GM12878 (cell line): ENCODE measurements at regions of chr1 and their contacts with region 1.

Region 1: DNA sequence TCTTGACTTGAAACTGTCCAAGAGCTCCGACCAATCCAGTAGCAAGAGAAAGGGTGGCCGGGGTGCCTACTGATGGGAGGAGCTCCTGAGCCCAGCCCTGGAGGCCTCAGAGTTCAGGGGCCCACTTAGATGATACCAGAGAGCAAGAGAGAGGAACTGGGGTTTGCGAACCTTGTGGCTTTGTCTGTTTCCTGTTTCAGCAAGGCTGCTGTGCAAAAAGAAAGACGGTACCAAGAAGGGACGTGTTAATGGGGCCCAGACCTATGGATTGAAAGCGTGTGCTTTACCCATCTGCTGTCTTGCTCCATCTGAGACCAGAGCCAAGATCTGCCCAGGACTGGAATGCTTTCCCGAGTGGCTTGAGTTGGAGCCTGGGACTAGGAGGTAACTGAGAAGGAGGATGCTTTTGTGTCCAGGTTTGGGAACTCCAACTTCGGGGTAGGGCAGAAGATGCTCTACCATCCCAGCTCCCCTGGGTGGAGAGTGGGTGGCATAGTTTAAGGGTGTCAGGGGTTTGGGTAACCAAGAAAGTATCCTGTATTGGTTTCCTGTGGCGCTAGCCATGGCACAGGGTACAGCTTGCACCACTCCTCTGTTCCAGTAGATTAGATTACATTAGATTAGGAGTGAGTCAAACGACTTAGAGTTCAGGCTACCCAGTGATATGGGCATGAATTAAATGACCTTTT is at the start of gene TRAF3IP3:
- DNase-seq: peak; percentile 83
- ATAC-seq: peak; percentile 86
- H3K4me3 ChIP-seq: peak within 1 kb of the TSS; percentile 73
- H3K27ac ChIP-seq: peak within 1 kb of the TSS; percentile 92
- H3K4me1 ChIP-seq: peaks cover 53% of the 10 kb centered on the region
- H3K27me3 ChIP-seq: no peaks in the 10 kb centered on the region
- CTCF ChIP-seq: no peak
- EP300 ChIP-seq: 0 out of 4 replicates have a peak, but pooled peaks of 1 of the 2 experiments have one; percentile 13
- POLR2A ChIP-seq: peak; percentile 84
- RAD21 ChIP-seq: no peak
- polyA plus RNA-seq, gene TRAF3IP3: 117 to 121 TPM

Region 2: GRCh38 chr1:209769171-209769904 is 13.3 kb after region 1 on chr1:
- CTCF ChIA-PET with region 1: interaction called, 117 read pairs
- POLR2A ChIA-PET with region 1: interaction called, 107 read pairs
- RAD21 ChIA-PET with region 1: interaction called, 188 read pairs
- SMC1A ChIA-PET with region 1: interaction called, 282 read pairs
- in situ Hi-C with region 1: no loop called
- intact Hi-C with region 1: loop called (anchors 1 kb)
- DNase-seq: peak; percentile 75
- ATAC-seq: peak; percentile 84
- H3K4me3 ChIP-seq: peak overlapping the region; percentile 72
- H3K27ac ChIP-seq: peak overlapping the region; percentile 93
- H3K4me1 ChIP-seq: peaks cover 52% of the 10 kb centered on the region
- H3K27me3 ChIP-seq: no peaks in the 10 kb centered on the region
- CTCF ChIP-seq: no peak
- EP300 ChIP-seq: peak; percentile 73 to 79; a peak in 3 of 4 replicates
- POLR2A ChIP-seq: no peak
- RAD21 ChIP-seq: no peak

Region 3: GRCh38 chr1:209774592-209774991 is 18.5 kb after region 1 on chr1:
- CTCF ChIA-PET with region 1: interaction called, 117 read pairs
- POLR2A ChIA-PET with region 1: interaction called, 107 read pairs
- RAD21 ChIA-PET with region 1: interaction called, 188 read pairs
- SMC1A ChIA-PET with region 1: interaction called, 282 read pairs
- in situ Hi-C with region 1: no loop called
- intact Hi-C with region 1: loop called (anchors 1 kb)
- DNase-seq: peak; percentile 32
- ATAC-seq: peak; percentile 82
- H3K4me3 ChIP-seq: peak overlapping the region; percentile 6
- H3K27ac ChIP-seq: peak overlapping the region; percentile 60
- H3K4me1 ChIP-seq: peaks cover 42% of the 10 kb centered on the region
- H3K27me3 ChIP-seq: no peaks in the 10 kb centered on the region
- CTCF ChIP-seq: no peak
- EP300 ChIP-seq: no peak; a peak in 1 of 4 replicates
- POLR2A ChIP-seq: no peak
- RAD21 ChIP-seq: no peak

Region 4: GRCh38 chr1:209784265-209785169 is 28.4 kb after region 1 on chr1 and contains the start of gene C1orf74:
- CTCF ChIA-PET with region 1: interaction called, 5 read pairs
- POLR2A ChIA-PET with region 1: interaction called, 6 read pairs
- RAD21 ChIA-PET with region 1: interaction called, 7 read pairs
- SMC1A ChIA-PET with region 1: interaction called, 13 read pairs
- in situ Hi-C with region 1: no loop called
- intact Hi-C with region 1: loop called (anchors 2 kb)
- DNase-seq: peak; percentile 92
- ATAC-seq: peak; percentile 100
- H3K4me3 ChIP-seq: peak within 1 kb of the TSS; percentile 80
- H3K27ac ChIP-seq: peak within 1 kb of the TSS; percentile 76
- H3K4me1 ChIP-seq: 0 out of 2 replicates have a peak, but pooled peaks cover 2% of the 10 kb centered on the region
- H3K27me3 ChIP-seq: no peaks in the 10 kb centered on the region
- CTCF ChIP-seq: no peak
- EP300 ChIP-seq: no peak
- POLR2A ChIP-seq: peak; percentile 90
- RAD21 ChIP-seq: no peak
- polyA plus RNA-seq, gene C1orf74: 3.4 to 4.4 TPM

Region 5: DNA sequence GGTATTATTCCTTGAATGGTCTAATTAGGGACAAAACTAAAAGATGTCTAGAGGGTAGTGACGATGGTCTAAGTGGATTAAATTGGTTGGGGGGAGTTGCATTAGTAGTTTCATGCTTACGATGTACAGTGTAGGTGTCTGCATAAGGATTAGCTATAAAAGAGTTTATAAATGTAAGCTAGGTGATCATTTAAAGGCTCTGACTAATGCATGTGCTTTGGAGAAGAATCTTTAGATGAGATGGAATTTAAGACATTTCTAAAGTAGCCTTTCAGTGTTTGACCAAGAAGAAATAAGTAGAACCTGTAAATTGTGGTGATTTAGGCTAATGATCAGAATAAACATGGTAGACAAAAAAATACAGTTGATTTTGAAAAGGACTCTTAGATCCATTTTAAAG is 189.3 kb after region 1 on chr1:
- CTCF ChIA-PET with region 1: no interaction called
- POLR2A ChIA-PET with region 1: no interaction called
- RAD21 ChIA-PET with region 1: no interaction called
- SMC1A ChIA-PET with region 1: no interaction called
- in situ Hi-C with region 1: no loop called
- intact Hi-C with region 1: no loop called
- DNase-seq: no peak
- ATAC-seq: no peak
- H3K4me3 ChIP-seq: no peak overlapping the region
- H3K27ac ChIP-seq: no peak overlapping the region
- H3K4me1 ChIP-seq: no peaks in the 10 kb centered on the region
- H3K27me3 ChIP-seq: no peaks in the 10 kb centered on the region
- CTCF ChIP-seq: no peak
- EP300 ChIP-seq: no peak
- POLR2A ChIP-seq: no peak
- RAD21 ChIP-seq: no peak